H1 (cell line): ENCODE measurements at regions of chr1 and their contacts with region 1.

Region 1: DNA sequence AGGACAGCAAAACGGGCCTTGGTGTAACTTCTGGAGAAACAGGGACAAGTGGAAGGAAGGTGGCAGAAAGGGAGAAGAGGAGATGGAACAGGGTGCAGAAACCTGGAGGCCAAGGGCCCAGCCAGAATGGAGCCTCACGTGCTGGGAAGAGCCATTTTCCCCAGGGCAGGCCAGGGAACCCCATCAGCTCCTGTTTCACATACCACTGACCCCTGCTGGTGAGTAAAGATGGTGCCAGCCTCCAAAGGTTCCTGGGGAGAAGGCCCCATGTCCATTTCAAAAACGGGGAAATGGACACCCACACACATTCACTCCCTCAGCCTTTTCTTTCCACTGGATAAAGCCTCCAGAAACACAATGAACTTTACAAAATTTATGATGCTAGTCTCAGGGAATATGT is 57.6 kb upstream of the JUN start:
- DNase-seq: no peak
- H3K4me3 ChIP-seq: no peak overlapping the region
- H3K27ac ChIP-seq: no peak overlapping the region
- H3K4me1 ChIP-seq: no peaks in the 10 kb centered on the region
- H3K27me3 ChIP-seq: no peaks in the 10 kb centered on the region
- CTCF ChIP-seq: peak; percentile 35 to 59 (median 44)
- EP300 ChIP-seq: no peak
- POLR2A ChIP-seq: no peak
- RAD21 ChIP-seq: peak; percentile 41 to 56

Region 2: GRCh38 chr1:58688931-58689566 is 152.4 kb before region 1 on chr1:
- CTCF ChIA-PET with region 1: no interaction called
- POLR2A ChIA-PET with region 1: no interaction called
- DNase-seq: no peak
- H3K4me3 ChIP-seq: no peak overlapping the region
- H3K27ac ChIP-seq: no peak overlapping the region
- H3K4me1 ChIP-seq: no peaks in the 10 kb centered on the region; a peak in 1 of 7 replicates
- H3K27me3 ChIP-seq: no peaks in the 10 kb centered on the region
- CTCF ChIP-seq: no peak
- EP300 ChIP-seq: no peak
- POLR2A ChIP-seq: no peak
- RAD21 ChIP-seq: no peak

Region 3: GRCh38 chr1:58764294-58764978 is 77.0 kb before region 1 on chr1:
- CTCF ChIA-PET with region 1: no interaction called
- POLR2A ChIA-PET with region 1: no interaction called
- DNase-seq: no peak
- H3K4me3 ChIP-seq: no peak overlapping the region
- H3K27ac ChIP-seq: no peak overlapping the region
- H3K4me1 ChIP-seq: peaks cover 0 to 5% (median under 1%) of the 10 kb centered on the region in 4 experiments; a peak in 2 of 7 replicates
- H3K27me3 ChIP-seq: no peaks in the 10 kb centered on the region
- CTCF ChIP-seq: no peak
- EP300 ChIP-seq: no peak
- POLR2A ChIP-seq: no peak
- RAD21 ChIP-seq: no peak

Region 4: GRCh38 chr1:58854576-58854975 is 13.1 kb after region 1 on chr1:
- CTCF ChIA-PET with region 1: interaction called, 24 read pairs
- POLR2A ChIA-PET with region 1: interaction called, 3 read pairs
- DNase-seq: no peak
- H3K4me3 ChIP-seq: no peak overlapping the region
- H3K27ac ChIP-seq: no peak overlapping the region
- H3K4me1 ChIP-seq: peaks cover 0 to 9% (median 3%) of the 10 kb centered on the region in 4 experiments; a peak in 3 of 7 replicates
- H3K27me3 ChIP-seq: no peaks in the 10 kb centered on the region
- CTCF ChIP-seq: no peak
- EP300 ChIP-seq: no peak
- POLR2A ChIP-seq: no peak
- RAD21 ChIP-seq: no peak

Region 5: GRCh38 chr1:59107516-59107915 is 266.1 kb after region 1 on chr1:
- CTCF ChIA-PET with region 1: no interaction called
- POLR2A ChIA-PET with region 1: no interaction called
- DNase-seq: no peak
- H3K4me3 ChIP-seq: no peak overlapping the region
- H3K27ac ChIP-seq: no peak overlapping the region
- H3K4me1 ChIP-seq: peaks cover 0 to 8% (median 6%) of the 10 kb centered on the region in 4 experiments; a peak in 5 of 7 replicates
- H3K27me3 ChIP-seq: no peaks in the 10 kb centered on the region
- CTCF ChIP-seq: no peak
- EP300 ChIP-seq: no peak
- POLR2A ChIP-seq: no peak
- RAD21 ChIP-seq: no peak